Activated CD4-positive, alpha-beta memory T cell treated with anti-CD3 and anti-CD28 coated beads, Interleukin-2, amount 10 ng/mL, durations not matched to agents 7 days and 5 days (primary cell): ENCODE measurements at regions of chr11 and their contacts with region 1.

Region 1: DNA sequence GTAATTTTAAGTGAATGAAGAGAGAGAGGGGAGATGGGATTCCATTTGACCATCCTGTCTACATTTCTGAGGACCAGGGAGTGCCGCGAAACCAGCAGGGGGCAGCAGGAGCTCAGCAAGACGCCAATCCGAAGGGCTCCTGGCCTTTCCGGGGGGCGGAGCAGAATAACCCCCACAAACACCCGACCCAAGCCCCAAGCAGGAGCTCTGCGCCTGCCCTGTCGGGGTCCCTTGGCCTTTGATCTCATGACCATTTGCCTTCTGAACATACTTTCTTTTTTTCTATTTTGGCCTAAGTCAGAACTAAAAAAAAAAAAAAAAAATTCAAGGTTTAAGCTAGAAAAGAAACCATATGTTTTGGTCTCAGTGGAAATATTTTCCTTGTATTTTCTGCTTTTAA is 21.9 kb upstream of the SCN2B start:
- DNase-seq: peak; percentile 85
- H3K4me3 Mint-ChIP-seq: no peak overlapping the region
- H3K27ac Mint-ChIP-seq: peak overlapping the region; percentile 63
- H3K4me1 Mint-ChIP-seq: peaks cover 15% of the 10 kb centered on the region
- H3K27me3 Mint-ChIP-seq: no peaks in the 10 kb centered on the region

Region 2: GRCh38 chr11:118180300-118180703 is 18.1 kb before region 1 on chr11:
- CTCF ChIA-PET with region 1: interaction called, 10 read pairs
- POLR2A ChIA-PET with region 1: no interaction called
- DNase-seq: no peak
- H3K4me3 Mint-ChIP-seq: no peak overlapping the region
- H3K27ac Mint-ChIP-seq: no peak overlapping the region
- H3K4me1 Mint-ChIP-seq: no peaks in the 10 kb centered on the region
- H3K27me3 Mint-ChIP-seq: peaks cover 26% of the 10 kb centered on the region

Region 3: DNA sequence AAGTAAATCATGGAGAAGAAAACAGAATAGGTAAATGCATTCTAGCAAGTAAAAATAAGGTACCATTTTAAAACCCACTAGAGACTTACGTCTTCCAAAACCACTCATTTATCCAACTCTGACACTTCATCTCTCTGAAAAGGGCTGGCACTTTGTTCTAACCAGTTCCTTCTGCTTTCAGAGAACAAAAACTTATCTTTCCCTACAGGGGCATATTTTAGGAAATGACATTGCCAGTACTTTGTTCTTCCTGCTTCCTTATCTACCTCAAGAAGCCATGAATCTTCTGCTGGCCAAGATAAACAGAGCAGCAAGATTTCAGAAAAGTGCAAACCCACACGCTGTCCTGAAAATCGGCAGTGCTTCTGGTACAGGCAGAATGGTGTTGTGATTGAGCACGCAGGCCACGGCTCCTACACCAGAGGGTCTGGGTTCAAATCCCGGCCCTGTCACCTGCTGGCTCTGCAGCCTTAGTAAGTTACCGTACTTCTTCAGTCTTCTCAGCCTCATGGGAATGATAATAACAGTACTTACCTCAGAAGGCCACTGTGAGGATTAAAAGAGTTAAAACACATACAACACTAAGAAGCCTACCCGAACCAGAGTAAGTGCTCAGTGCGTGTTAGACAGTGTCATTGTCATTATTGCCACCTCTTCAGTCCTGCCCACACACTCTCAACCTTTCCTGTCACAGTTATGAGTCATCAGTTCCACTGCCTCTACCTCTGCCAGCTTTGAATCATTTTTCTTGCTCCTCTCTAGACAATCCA is 42.8 kb after region 1 on chr11:
- CTCF ChIA-PET with region 1: interaction called, 43 read pairs
- POLR2A ChIA-PET with region 1: interaction called, 54 read pairs
- DNase-seq: peak; percentile 74
- H3K4me3 Mint-ChIP-seq: peak overlapping the region; percentile 67
- H3K27ac Mint-ChIP-seq: peak overlapping the region; percentile 93
- H3K4me1 Mint-ChIP-seq: peaks cover 90% of the 10 kb centered on the region
- H3K27me3 Mint-ChIP-seq: no peaks in the 10 kb centered on the region

Region 4: DNA sequence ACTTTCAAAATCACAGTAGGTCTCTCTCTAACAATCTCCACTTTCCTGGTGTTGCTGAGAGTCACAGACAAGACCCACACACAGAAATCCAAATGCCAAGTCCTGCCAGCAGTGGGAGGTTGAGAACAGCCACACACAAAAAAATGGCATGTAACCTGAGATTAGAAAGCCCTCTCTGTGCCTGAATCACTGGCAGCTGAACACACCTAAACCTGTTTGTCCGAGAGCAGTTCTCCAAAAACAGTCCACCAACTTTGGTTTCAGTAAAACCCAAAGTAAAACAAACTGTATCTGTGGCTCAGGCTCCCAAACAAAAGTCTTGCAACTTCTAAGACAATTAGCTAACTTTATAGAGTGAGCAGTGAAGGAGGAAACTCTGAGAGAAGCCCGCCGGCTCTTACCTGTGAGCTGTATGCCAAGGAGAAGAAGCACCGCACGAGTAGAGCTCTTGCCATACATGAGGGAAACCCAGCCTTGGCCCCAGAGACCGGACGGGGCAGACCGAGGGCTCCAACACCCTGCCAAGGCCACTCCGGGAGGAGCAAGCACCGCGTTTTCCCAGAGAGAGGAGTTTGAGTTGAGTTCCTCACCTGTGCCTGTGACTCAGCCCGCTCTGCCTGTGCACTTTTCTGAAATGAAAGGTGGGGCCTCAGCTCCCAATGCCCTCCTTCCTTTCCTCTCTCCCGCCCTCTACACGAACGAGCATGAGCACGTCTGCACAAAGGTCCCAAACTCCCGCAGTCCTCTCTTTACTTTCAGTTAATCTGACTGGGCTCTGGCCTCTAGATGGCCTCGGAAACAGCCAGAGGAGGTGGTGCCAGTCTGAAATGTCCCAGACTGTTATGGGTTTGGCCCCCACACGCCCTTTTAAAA is 65.6 kb after region 1 on chr11 and contains the start of gene MPZL2:
- CTCF ChIA-PET with region 1: interaction called, 31 read pairs
- POLR2A ChIA-PET with region 1: interaction called, 4 read pairs
- DNase-seq: no peak
- H3K4me3 Mint-ChIP-seq: peak within 1 kb of the TSS; percentile 72
- H3K27ac Mint-ChIP-seq: no peak within 1 kb of the TSS
- H3K4me1 Mint-ChIP-seq: peaks cover 42% of the 10 kb centered on the region
- H3K27me3 Mint-ChIP-seq: peaks cover 10% of the 10 kb centered on the region
- total RNA-seq, gene MPZL2: 3.8 to 5.3 TPM

Region 5: GRCh38 chr11:118295834-118296454 is 97.6 kb after region 1 on chr11:
- CTCF ChIA-PET with region 1: interaction called, 62 read pairs
- POLR2A ChIA-PET with region 1: interaction called, 7 read pairs
- DNase-seq: peak; percentile 42
- H3K4me3 Mint-ChIP-seq: no peak overlapping the region
- H3K27ac Mint-ChIP-seq: no peak overlapping the region
- H3K4me1 Mint-ChIP-seq: peaks cover 19% of the 10 kb centered on the region
- H3K27me3 Mint-ChIP-seq: peaks cover 1% of the 10 kb centered on the region

Region 6: GRCh38 chr11:118343981-118344515 is 145.7 kb after region 1 on chr11 and contains the start of gene CD3G:
- CTCF ChIA-PET with region 1: interaction called, 16 read pairs
- POLR2A ChIA-PET with region 1: interaction called, 13 read pairs
- DNase-seq: peak; percentile 80
- H3K4me3 Mint-ChIP-seq: peak within 1 kb of the TSS; percentile 89
- H3K27ac Mint-ChIP-seq: peak within 1 kb of the TSS; percentile 99
- H3K4me1 Mint-ChIP-seq: peaks cover 66% of the 10 kb centered on the region
- H3K27me3 Mint-ChIP-seq: no peaks in the 10 kb centered on the region
- total RNA-seq, gene CD3G: 223 to 225 TPM

Region 7: DNA sequence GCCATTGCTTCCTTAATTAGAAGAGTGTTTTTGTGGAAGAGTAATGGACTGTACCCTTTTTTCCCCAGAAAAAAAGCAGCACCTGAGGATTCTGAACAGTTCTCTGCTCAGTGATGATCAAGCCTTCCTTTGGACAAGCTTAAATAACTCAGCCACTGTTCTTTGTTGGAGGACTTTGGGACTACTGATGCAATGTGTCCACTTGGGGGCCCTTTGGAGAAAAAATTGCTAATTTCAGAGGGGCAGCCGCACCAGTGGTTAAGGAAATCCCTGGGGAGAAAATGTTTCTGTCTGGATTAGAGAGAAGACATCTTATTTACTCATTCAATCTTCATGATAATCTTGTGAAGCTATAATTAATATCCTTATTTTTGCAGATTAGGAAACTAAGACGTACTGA is 232.6 kb after region 1 on chr11:
- CTCF ChIA-PET with region 1: no interaction called
- POLR2A ChIA-PET with region 1: no interaction called
- DNase-seq: no peak
- H3K4me3 Mint-ChIP-seq: no peak overlapping the region
- H3K27ac Mint-ChIP-seq: no peak overlapping the region
- H3K4me1 Mint-ChIP-seq: peaks cover 17% of the 10 kb centered on the region
- H3K27me3 Mint-ChIP-seq: no peaks in the 10 kb centered on the region